ENCODE measurements at regions of chr10 and their contacts with region 1.

Region 1: DNA sequence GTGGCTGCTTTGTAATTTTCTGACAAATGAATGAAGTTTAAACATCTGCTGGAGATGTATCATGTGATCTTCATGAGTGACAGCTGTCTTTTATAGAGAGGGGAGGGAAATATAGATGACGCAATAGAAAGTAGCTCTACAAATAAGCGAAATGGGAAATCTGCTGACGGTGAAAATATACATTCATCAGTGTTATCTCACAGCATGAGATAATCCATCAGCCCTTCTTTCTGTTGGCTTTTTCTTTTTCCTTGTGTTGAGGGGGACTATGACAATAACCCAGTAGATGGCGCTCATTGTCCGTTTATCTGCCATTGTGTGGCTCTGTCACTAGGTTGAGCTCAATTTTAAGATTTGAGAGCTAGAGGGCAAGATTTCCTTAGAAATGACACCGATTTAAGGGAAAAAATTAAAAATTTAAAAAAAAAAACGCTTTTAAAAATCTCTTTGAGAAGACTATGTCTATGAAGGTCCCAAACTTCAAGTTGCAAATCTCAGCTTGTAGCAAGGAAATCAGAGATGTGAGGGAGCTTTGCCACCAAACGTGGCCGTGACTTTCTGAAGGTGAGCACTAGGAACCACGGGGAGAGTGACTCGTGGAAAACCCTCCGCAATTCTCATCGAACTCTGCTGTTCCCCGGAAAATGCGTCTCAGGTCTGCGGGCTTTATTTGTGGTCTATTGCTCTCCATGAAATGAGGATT is 114.6 kb upstream of the SFMBT2 start:
- DNase-seq: peak; percentile 67
- ATAC-seq: peak; percentile 79
- H3K4me3 Mint-ChIP-seq: no peak overlapping the region
- H3K27ac Mint-ChIP-seq: no peak overlapping the region
- H3K4me1 Mint-ChIP-seq: peaks cover 4% of the 10 kb centered on the region; the same call in 1 of the 2 replicates
- H3K27me3 Mint-ChIP-seq: no peaks in the 10 kb centered on the region; the same call in 1 of the 2 replicates
- CTCF ChIP-seq: peak; percentile 66

Region 2: GRCh38 chr10:7340179-7340874 is 185.1 kb before region 1 on chr10:
- CTCF ChIA-PET with region 1: no interaction called
- POLR2A ChIA-PET with region 1: no interaction called
- DNase-seq: no peak
- ATAC-seq: no peak
- H3K4me3 Mint-ChIP-seq: no peak overlapping the region
- H3K27ac Mint-ChIP-seq: peak overlapping the region; percentile 69; the same call in 1 of the 2 replicates
- H3K4me1 Mint-ChIP-seq: peaks cover 28% of the 10 kb centered on the region
- H3K27me3 Mint-ChIP-seq: no peaks in the 10 kb centered on the region
- CTCF ChIP-seq: no peak

Region 3: DNA sequence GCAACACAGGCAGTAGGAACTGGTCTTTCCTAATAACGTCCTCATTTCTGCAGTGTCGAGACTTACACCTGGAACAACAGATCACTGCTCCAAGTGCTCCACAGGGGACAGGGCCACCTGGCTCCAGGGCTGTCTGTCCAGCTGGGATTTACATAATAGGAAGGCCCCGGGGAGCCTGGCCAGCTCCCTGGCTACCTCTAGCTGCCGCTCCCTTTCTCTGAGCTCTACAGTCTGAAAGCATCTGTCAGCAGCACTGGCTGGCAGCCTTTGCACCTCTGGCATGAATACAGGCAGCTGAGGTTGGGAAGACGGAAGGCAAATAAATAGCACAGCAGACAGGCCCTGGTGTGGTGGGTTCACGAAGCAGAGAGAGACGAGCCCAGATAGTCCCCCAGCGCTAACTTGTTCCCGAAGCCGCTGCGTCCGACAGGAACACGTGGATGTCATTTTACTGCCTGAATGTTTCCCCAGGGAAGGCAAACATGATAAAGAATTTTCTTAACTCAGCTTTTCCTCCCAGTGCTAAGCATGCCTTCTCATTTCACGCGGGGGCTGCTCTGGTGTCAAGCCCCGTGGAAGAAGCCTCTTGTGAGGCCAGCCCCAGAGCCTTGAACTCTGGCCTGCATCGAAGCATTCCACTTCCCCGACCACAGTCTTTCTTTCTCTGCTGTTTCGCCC is 35.9 kb after region 1 on chr10:
- CTCF ChIA-PET with region 1: interaction called, 18 read pairs
- POLR2A ChIA-PET with region 1: no interaction called
- DNase-seq: peak; percentile 40
- ATAC-seq: peak; percentile 78
- H3K4me3 Mint-ChIP-seq: no peak overlapping the region
- H3K27ac Mint-ChIP-seq: no peak overlapping the region; the same call in 1 of the 2 replicates
- H3K4me1 Mint-ChIP-seq: peaks cover 21% of the 10 kb centered on the region
- H3K27me3 Mint-ChIP-seq: no peaks in the 10 kb centered on the region; the same call in 1 of the 2 replicates
- CTCF ChIP-seq: no peak

Region 4: GRCh38 chr10:7634142-7634894 is 108.9 kb after region 1 on chr10:
- CTCF ChIA-PET with region 1: interaction called, 16 read pairs
- POLR2A ChIA-PET with region 1: no interaction called
- DNase-seq: no peak
- ATAC-seq: no peak
- H3K4me3 Mint-ChIP-seq: no peak overlapping the region
- H3K27ac Mint-ChIP-seq: peak overlapping the region; percentile 76
- H3K4me1 Mint-ChIP-seq: peaks cover 27% of the 10 kb centered on the region
- H3K27me3 Mint-ChIP-seq: peaks cover 11% of the 10 kb centered on the region
- CTCF ChIP-seq: no peak

Region 5: GRCh38 chr10:7687228-7687907 is 161.9 kb after region 1 on chr10:
- CTCF ChIA-PET with region 1: interaction called, 96 read pairs
- POLR2A ChIA-PET with region 1: interaction called, 9 read pairs
- DNase-seq: peak; percentile 86
- ATAC-seq: peak; percentile 98
- H3K4me3 Mint-ChIP-seq: no peak overlapping the region
- H3K27ac Mint-ChIP-seq: no peak overlapping the region
- H3K4me1 Mint-ChIP-seq: no peaks in the 10 kb centered on the region
- H3K27me3 Mint-ChIP-seq: peaks cover 7% of the 10 kb centered on the region; the same call in 1 of the 2 replicates
- CTCF ChIP-seq: peak; percentile 64; the same call in 1 of the 2 replicates

Region 6: DNA sequence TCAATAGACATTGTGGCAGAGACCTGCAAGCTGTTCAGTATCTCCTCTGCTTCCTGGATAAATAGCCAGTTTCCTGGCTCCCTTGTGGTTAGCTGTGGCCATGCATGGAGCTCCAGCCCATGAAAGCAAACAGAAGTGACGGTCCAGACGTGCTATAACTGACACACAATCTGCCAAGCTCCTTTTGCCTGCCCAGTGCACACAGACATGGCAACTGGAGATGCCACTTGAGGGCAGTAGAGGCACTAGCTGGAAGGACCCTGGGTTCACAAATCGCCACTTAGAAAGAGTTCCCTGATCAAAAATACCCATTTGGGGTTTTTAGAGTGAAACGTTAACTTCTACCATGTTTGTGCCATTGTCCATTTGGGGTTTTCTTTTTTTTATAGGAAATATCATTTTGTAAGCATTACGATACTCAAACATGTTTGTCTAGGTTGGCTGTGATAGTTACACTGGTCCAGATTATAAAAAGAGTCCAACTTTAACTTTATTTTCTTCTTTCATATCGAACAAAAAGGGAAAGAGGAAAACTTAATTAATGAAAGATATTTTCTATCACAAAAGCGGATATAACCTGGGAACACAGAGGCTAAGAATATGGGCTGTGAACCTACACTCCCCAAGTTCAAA is 231.0 kb after region 1 on chr10:
- CTCF ChIA-PET with region 1: interaction called, 19 read pairs
- POLR2A ChIA-PET with region 1: no interaction called
- DNase-seq: peak; percentile 33
- ATAC-seq: peak; percentile 55; the same call in 1 of the 2 replicates
- H3K4me3 Mint-ChIP-seq: no peak overlapping the region
- H3K27ac Mint-ChIP-seq: no peak overlapping the region
- H3K4me1 Mint-ChIP-seq: no peaks in the 10 kb centered on the region
- H3K27me3 Mint-ChIP-seq: no peaks in the 10 kb centered on the region
- CTCF ChIP-seq: no peak